Activated CD4-positive, alpha-beta T cell treated with anti-CD3 and anti-CD28 coated beads, Interleukin-2, amount 10 ng/mL, durations not matched to agents 24 days and 14 days (primary cell): ENCODE measurements at regions of chr7 and their contacts with region 1.

Region 1: DNA sequence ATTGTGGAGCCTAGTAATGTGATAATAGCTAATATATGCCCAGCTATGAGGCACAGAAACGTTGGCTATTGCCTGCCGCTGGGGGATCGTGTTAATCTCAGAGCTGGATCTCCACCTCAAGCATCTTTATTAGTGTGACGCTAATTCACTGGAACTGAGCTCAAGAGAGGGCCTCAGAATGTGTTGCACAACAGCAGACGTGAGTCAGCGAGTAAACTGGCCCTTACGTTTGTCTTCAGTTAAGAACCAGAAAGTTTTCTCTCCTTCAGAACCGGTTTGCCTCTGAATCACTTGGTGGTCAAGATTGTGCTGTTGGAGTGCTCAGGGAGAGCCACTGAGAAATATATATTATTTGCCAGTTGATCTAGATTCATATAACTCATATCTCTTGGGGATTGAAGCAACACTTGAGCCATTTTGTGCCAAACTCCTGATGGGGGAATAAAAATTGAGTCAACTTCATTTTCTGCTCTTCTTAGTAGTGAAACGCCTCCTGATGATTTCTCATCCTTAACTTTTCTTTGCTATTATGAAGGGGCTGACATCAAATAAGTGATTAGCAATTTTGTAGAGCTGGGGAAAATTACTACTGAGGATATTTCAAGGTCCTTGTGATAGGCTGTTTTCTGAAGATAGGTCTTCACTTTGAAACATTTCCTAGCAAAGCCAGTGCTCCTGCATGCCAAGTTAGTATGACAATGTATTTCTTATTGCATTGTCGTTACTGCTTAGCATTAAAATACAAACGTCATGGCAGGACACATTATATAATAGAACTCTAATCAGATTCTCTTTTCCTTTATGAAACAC is 22.3 kb downstream of the BZW2 start:
- DNase-seq: no peak
- H3K4me3 Mint-ChIP-seq: no peak overlapping the region
- H3K27ac Mint-ChIP-seq: no peak overlapping the region
- H3K4me1 Mint-ChIP-seq: peaks cover 17% of the 10 kb centered on the region
- H3K27me3 Mint-ChIP-seq: no peaks in the 10 kb centered on the region

Region 2: DNA sequence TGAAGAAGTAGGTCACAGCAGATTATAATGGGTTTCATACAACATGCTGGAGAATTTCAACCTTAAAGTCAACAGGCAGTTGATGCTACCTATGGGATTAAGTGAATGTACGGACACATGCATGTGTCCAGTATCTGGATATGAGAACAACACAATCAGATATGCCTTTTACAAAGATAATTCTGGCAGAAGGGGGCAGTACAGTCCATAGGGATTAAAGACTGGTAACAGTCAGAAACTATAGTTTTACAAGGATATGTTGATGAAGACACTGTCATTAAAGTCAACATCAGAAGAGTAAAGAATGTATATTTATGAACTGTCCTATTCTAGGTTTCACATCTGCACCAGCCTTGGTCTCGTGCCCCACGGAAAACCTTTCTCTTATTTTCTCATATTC is 64.2 kb before region 1 on chr7:
- intact Hi-C with region 1: loop called (anchors 10 kb)
- DNase-seq: no peak
- H3K4me3 Mint-ChIP-seq: no peak overlapping the region
- H3K27ac Mint-ChIP-seq: no peak overlapping the region
- H3K4me1 Mint-ChIP-seq: no peaks in the 10 kb centered on the region
- H3K27me3 Mint-ChIP-seq: no peaks in the 10 kb centered on the region